Left cardiac atrium (tissue), 4 donors: ENCODE measurements at regions of chr17 and their contacts with region 1.

Region 1: GRCh38 chr17:17568749-17569195 is 22.7 kb downstream of the PEMT start:
- DNase-seq: peak; percentile 76
- ATAC-seq: peak; percentile 15 to 22

Region 2: DNA sequence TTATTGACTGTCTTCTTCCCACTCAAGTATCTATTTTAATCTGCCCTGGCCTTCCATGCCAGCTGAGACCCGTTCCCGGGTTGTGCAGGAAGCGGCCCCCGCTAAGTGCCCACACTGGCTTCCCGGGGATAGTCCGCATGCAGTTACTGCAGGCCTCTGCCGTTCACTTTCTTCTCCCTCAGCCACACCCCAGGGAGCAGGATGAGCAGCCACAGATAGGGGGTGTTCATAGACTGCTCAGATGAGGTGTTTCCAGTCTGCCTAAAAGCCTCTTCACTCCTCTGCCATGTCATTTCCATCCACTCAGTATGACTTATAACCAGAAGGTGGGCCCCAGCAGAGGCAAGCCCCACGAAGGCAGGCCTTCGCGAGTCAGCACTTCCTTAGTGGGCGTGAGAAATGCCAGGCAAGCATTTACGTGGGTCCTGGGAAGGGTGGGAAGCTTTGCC is 84.3 kb before region 1 on chr17:
- intact Hi-C with region 1: loop called in 1 of 2 experiments (anchors 5 kb)
- DNase-seq: no peak
- ATAC-seq: peak; percentile 56 to 65

Region 3: GRCh38 chr17:17496189-17497064 is 72.3 kb before region 1 on chr17 and contains the start of gene RASD1:
- intact Hi-C with region 1: loop called (anchors 1 to 5 kb)
- DNase-seq: peak; percentile 93
- ATAC-seq: peak; percentile 92 to 95
- total RNA-seq, gene RASD1: 35.3 to 55.1 TPM

Region 4: GRCh38 chr17:17535957-17536356 is 32.8 kb before region 1 on chr17:
- intact Hi-C with region 1: no loop called
- DNase-seq: peak; percentile 85
- ATAC-seq: peak; percentile 93 to 94

Region 5: DNA sequence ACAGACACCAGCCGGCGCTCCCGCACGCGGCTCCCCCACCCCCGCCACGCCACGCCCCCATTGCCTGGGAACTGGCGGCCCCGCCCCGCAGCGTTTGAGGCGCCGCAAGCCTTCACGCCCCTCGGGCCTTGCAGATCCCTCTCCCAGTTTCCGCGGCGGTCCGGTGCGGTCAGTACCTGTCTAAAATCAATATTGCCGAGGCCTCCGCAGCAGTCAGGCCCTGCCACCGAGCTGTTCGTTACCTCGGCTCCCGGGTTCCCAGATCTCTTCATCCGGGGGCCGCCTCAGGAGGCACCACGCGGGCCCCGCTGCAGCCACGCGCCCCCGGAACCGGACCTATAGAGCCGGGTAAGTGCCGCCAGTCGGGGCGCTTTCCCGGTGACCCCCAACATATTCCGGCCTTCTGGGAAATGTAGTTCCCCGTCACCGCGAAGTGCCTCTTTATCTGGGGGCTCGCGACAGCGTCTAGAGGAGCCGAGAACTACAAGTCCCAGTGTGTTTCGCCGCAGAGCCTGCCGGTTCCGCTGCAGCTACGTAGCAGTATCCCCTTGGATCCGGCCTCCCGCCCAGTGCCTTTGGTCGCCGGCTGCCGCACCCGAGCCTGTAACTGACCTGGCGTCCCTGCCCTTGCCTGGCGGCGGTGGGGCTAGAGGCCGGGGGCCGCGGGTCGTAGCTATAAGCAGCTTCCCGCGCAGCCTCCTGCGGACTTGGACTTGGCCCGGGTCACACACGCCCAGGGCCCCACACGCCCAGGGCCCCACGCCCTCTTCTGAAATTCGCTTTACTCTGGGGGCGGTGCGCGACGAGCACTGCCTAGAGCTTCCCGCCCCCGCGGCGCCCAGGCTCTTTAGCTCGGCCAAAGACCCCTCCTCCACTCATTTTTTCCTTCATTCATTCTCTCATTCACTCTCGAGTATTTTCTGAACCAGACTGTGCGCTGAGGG is 22.9 kb after region 1 on chr17 and contains the start of gene PEMT:
- intact Hi-C with region 1: loop called in 1 of 2 experiments (anchors 1 kb)
- DNase-seq: peak; percentile 98
- ATAC-seq: peak; percentile 97 to 99
- total RNA-seq, gene PEMT: 28.1 to 36.5 TPM